ENCODE measurements at regions of chr18 and their contacts with region 1.

Region 1: GRCh38 chr18:62522504-62523254 is at the start of gene ZCCHC2:
- DNase-seq: peak; percentile 95 to 99 (median 98)
- ATAC-seq: peak; percentile 76 to 77
- H3K4me3 Mint-ChIP-seq: peak within 1 kb of the TSS; percentile 87 to 99 (median 94)
- H3K27ac Mint-ChIP-seq: peak within 1 kb of the TSS; percentile 69 to 99 (median 92)
- H3K4me1 Mint-ChIP-seq: peaks cover 11 to 50% (median 34%) of the 10 kb centered on the region in 4 donors
- H3K27me3 Mint-ChIP-seq: no peaks in the 10 kb centered on the region
- polyA plus RNA-seq, gene ZCCHC2: 1.8 to 2.6 (median 2.6) TPM

Region 2: DNA sequence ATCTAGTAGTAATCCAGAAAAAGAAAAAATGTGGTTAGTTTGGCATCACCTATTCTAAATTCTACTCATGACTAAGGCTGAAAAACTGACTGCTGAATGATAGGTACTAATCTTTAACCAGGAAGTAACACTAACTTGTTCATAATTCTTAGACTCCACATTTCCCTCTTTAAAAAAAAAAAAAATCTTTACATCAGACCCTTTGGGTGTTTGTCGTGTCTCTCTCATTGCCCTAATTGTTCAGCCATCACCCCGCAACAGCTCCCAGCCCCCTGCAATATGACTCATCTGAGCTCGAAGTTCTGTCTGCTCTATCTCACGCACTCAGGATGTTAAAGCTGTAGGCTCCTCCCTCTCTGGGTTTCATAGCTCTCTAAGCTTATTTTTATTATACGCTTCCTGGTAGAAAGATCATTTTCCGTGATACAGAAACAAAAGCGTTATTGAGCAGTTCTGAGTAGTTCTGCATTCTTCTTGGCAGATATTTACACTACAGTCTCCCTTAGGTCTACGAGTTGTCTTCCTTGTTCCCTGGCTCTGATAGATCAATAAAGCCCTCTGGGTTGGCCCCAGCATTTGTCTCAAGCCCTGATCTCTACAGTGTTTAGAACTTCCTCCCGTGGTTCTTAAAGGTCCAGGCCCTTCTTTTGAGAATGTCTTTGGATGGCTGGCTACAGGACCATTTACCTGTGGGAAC is 102.0 kb before region 1 on chr18:
- POLR2A ChIA-PET with region 1: interaction called, 32 read pairs
- DNase-seq: peak; percentile 18 to 85 (median 56)
- ATAC-seq: peak; percentile 94 to 98
- H3K4me3 Mint-ChIP-seq: peak overlapping the region; percentile 70 to 92 (median 78)
- H3K27ac Mint-ChIP-seq: peak overlapping the region; percentile 87 to 97 (median 94)
- H3K4me1 Mint-ChIP-seq: peaks cover 29 to 46% (median 43%) of the 10 kb centered on the region in 4 donors
- H3K27me3 Mint-ChIP-seq: no peaks in the 10 kb centered on the region

Region 3: DNA sequence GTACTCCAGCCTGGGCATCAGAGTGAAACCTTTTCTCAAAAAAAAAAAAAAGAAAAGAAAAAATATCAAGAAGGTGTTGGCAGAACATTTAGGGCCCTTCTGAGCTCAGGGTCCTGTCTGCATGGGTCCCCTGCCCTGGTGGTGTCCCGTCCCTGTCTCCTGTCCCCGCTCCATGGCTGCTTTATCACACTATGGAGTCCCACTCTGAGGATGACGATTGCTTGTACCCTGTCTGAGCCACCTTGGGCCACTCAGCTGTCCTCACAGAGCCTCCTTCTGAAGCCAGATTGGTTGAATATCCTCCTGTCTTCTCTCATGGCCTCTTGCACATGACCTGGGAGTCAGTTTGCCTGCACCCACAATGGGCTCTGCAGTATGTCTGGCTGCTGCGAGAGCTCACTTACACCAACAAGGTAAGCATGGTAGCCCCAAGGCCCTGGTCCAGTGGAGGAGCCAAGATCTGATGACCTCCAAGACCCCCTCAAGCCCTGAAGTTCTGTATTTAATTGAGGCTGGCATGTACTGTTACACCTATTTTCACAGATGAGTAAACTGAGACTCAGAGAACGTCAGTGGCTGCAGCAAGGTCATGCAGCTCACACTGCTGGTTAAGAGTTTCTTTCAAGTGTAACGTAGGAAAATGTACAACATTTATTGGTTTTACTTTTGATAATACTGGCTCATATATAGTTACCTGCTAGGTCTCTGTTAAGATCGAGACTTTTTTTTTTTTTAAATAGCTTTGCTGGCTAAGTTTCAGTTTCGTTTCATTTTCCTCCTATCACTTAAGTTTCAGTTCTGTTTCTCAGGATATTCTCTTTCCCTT is 16.8 kb before region 1 on chr18:
- POLR2A ChIA-PET with region 1: interaction called, 42 read pairs
- DNase-seq: peak in 3 of 10 donors; percentile 42 to 47 (median 42)
- ATAC-seq: peak; percentile 59 to 80
- H3K4me3 Mint-ChIP-seq: peak overlapping the region; percentile 80 to 93 (median 85)
- H3K27ac Mint-ChIP-seq: peak overlapping the region; percentile 93 to 100 (median 96)
- H3K4me1 Mint-ChIP-seq: peaks cover 6 to 26% (median 17%) of the 10 kb centered on the region in 4 donors
- H3K27me3 Mint-ChIP-seq: no peaks in the 10 kb centered on the region

Region 4: DNA sequence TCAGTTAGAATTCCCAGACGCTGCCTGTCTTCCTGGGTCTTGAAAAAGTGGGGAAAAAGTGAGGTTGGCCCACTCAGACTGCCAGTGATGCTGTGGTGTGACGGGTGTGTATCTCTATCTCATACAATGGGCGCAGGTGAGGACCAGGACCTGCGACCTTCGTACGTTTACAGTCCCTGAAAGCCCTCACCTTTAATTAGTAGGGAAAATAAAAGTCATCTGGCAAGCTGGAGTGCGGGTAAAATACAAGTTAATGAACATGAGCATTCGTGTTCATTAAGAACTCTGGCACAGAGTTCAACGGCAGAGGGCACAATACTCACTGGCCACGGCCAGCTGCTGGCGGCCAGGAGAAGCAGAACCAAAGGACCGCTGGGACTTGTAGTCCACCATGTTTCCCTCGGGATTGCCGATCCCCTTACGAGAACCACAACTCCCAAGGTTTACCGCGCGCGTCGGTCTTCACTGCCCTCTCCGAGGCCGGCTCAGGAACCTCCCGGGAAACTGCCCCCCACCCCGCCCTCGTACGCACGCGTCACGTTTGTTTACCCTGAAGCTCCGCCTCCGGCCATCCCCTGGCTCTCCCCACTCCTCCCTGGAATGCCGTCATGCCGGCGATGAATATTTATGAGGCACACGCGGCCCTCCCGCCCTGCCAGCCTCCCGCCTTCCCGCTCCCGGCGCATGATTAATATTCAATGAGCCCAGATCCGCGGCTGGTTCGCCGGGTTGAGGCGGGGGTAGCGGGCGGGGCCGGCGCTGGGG is 192.2 kb after region 1 on chr18:
- POLR2A ChIA-PET with region 1: interaction called, 31 read pairs
- DNase-seq: peak; percentile 81 to 98 (median 90)
- ATAC-seq: peak; percentile 72 to 79
- H3K4me3 Mint-ChIP-seq: peak overlapping the region; percentile 82 to 96 (median 93)
- H3K27ac Mint-ChIP-seq: peak overlapping the region; percentile 87 to 99 (median 98)
- H3K4me1 Mint-ChIP-seq: peaks cover 10 to 35% (median 29%) of the 10 kb centered on the region in 4 donors
- H3K27me3 Mint-ChIP-seq: no peaks in the 10 kb centered on the region

Measured in naive thymus-derived CD8-positive, alpha-beta T cell (primary cell).